Activated B cell treated with CpG ODN at 0.5 μM for 24 hours (primary cell): ENCODE measurements at regions of chr12 and their contacts with region 1.

Region 1: DNA sequence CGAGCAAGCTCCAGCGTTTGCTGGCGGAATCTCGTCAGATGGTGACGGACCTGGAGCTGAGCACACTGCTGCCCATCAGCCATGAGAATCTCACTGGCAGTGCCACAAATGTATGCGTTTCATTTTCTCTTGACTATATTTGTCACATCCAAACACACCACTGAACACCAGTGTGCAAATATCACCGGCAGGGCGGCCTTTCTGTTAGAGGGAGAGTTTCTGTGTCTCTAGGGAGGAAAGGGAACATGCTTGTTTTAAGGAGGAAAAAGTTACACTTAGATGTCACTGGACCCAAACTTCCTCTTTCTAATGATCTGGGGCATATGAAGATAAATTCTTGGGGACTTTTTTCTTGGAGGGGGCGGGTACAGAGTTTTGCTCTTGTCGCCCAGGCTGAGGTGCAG is 21.9 kb upstream of the HIP1R start:
- DNase-seq: peak; percentile 54
- ATAC-seq: peak; percentile 95
- H3K4me3 Mint-ChIP-seq: peak overlapping the region; percentile 86
- H3K27ac Mint-ChIP-seq: peak overlapping the region; percentile 98
- H3K4me1 Mint-ChIP-seq: peaks cover 53% of the 10 kb centered on the region
- H3K27me3 Mint-ChIP-seq: no peaks in the 10 kb centered on the region
- CTCF ChIP-seq: no peak

Region 2: DNA sequence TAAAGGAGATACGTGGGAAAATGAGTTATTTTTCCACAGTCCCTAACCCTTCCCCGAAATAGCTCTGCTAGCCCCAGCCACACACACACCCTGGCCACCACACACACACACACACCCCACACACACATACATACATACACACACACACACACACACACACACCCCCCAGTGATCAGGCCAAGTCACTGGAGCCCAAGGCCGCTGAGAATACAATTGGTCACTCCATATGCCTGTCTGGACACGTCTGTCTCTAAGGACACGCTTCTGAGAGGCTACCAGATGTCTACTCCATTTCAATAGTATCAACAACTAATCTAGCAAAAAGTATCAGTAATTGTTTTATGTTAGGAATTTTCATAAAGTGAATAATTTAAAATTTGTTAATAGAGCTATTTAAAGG is 574.5 kb before region 1 on chr12:
- CTCF ChIA-PET with region 1: no interaction called
- POLR2A ChIA-PET with region 1: no interaction called
- intact Hi-C with region 1: no loop called
- DNase-seq: no peak
- ATAC-seq: no peak
- H3K4me3 Mint-ChIP-seq: no peak overlapping the region
- H3K27ac Mint-ChIP-seq: no peak overlapping the region
- H3K4me1 Mint-ChIP-seq: no peaks in the 10 kb centered on the region
- H3K27me3 Mint-ChIP-seq: no peaks in the 10 kb centered on the region
- CTCF ChIP-seq: no peak

Region 3: DNA sequence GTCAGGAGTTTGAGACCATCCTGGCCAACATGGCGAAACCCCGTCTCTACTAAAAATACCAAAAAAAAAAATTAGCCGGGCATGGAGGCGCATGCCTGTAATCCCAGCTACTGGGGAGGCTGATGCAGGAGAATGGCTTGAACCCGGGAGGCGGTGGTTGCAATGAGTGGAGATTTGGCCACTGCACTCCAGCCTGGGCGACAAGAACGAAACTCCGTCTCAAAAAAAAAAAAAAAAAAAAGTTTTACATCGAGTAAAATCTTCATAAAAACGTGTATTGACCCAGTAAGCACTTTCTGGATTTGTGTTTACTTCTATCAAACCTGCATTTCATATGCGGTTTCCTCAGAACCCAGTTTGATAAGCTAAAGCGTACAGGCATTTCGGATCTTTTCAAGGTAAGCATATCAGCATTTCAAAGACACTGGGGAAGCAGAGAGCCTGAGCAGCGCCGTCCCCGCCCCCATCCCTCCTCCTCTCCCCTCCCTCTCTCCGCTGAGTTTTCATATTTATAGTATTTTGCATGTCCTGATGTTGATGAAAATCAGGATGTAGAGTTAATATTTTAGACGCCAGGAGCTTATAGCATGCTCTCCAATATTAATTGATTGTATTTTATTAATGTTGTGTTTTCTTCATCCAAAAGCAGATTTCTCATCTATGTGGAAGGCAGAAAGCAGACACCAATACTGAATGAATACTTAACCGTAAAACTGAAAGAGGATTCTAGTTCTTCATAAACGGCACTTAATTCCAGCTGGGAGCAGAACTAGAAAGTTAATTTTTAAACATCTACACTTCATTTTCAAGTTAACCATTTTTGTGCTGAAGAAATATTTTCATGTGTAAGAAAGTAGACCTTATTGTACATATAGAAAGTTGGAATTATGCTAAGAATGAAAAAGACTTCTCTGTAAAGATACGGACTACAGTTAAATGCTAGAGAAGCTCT is 12.7 kb after region 1 on chr12:
- CTCF ChIA-PET with region 1: interaction called, 3 read pairs
- POLR2A ChIA-PET with region 1: interaction called, 9 read pairs
- intact Hi-C with region 1: loop called (anchors 1 kb)
- DNase-seq: no peak
- ATAC-seq: no peak
- H3K4me3 Mint-ChIP-seq: peak overlapping the region; percentile 71
- H3K27ac Mint-ChIP-seq: no peak overlapping the region
- H3K4me1 Mint-ChIP-seq: peaks cover 47% of the 10 kb centered on the region
- H3K27me3 Mint-ChIP-seq: no peaks in the 10 kb centered on the region
- CTCF ChIP-seq: no peak

Region 4: GRCh38 chr12:122909442-122910288 is 96.4 kb after region 1 on chr12:
- CTCF ChIA-PET with region 1: no interaction called
- POLR2A ChIA-PET with region 1: no interaction called
- intact Hi-C with region 1: no loop called
- DNase-seq: no peak
- ATAC-seq: no peak
- H3K4me3 Mint-ChIP-seq: no peak overlapping the region
- H3K27ac Mint-ChIP-seq: no peak overlapping the region
- H3K4me1 Mint-ChIP-seq: no peaks in the 10 kb centered on the region
- H3K27me3 Mint-ChIP-seq: no peaks in the 10 kb centered on the region
- CTCF ChIP-seq: no peak

Region 5: DNA sequence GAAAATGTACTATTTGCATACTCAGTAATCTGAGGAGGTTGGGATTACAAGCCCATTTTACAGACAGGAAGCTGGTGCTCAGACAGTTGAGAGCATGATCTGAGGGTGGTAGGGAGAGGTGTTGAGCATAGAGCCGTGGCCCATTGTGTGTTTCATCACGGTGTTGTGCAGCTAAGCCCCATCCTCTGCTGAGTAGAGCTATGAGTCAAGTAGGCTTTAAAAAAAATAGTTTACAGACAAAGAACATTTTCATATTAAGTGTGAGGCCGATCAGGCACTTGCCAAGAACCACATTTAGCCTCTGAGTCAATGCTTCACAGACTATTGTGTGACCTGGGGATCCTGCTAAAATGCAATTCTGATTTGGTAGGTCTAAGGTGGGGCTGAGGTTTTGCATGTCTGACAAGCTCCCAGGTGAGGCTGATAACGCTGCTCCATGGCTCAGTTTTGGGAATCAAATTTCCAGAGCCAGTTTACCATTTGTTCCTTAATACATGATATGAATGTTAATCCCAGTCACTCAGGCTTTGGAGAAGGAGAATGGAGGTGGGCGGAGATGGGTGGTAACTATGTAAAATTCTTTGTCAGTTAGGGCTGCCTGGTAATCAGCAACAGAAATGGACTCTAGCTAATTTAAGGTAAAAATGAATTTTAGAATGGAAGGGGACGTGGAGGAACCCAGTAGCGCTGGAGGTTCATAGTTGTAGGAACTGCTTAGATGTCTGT is 1181.9 kb after region 1 on chr12:
- CTCF ChIA-PET with region 1: no interaction called
- POLR2A ChIA-PET with region 1: no interaction called
- intact Hi-C with region 1: no loop called
- DNase-seq: no peak
- ATAC-seq: no peak
- H3K4me3 Mint-ChIP-seq: no peak overlapping the region
- H3K27ac Mint-ChIP-seq: no peak overlapping the region
- H3K4me1 Mint-ChIP-seq: peaks cover 9% of the 10 kb centered on the region
- H3K27me3 Mint-ChIP-seq: no peaks in the 10 kb centered on the region
- CTCF ChIP-seq: no peak